Thyroid gland (tissue), 4 donors: ENCODE measurements at regions of chr16 and their contacts with region 1.

Region 1: DNA sequence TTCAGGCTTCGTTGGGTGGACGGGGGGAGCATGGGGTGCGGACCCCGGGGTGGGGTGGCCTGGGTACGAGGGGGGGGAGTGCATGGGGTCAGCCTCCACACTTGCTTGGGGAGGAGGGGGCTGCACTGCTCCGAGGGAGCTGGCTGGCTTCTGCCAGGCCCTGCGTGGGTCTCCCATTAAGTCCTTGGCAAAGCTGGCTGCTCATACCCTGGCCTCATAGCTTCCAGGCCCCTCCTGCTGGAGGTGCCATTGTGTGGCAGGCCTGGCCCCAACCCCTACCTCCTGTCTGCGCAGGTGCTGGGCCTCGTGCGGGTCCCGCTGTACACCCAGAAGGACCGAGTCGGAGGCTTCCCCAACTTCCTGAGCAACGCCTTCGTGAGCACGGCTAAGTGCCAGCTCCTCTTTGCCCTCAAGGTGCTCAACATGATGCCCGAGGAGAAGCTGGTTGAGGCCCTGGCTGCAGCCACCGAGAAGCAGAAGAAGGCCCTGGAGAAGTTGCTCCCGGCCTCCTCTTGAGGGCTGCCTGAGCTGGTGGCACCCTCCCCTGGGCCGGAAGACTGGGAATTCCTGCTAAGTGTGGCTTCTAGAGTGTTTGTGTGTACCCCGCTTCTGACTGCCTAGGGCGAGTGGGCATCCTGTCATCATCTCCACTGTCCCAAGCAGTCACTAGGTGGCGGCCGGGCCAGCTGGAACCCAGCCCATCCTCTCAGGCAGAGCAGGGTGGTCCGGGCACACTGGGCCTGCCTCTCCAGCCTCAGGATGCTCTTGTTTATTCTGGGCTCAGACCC is 1.5 kb downstream of the NUDT16L1 start:
- DNase-seq: no peak
- H3K4me3 ChIP-seq: peak overlapping the region in 1 of 3 donors; percentile 97
- H3K27ac ChIP-seq: peak overlapping the region in 2 of 3 donors; percentile 22 to 87
- H3K4me1 ChIP-seq: peaks cover 15 to 22% of the 10 kb centered on the region in 2 donors
- H3K27me3 ChIP-seq: no peaks in the 10 kb centered on the region
- CTCF ChIP-seq: no peak
- POLR2A ChIP-seq: no peak

Region 2: DNA sequence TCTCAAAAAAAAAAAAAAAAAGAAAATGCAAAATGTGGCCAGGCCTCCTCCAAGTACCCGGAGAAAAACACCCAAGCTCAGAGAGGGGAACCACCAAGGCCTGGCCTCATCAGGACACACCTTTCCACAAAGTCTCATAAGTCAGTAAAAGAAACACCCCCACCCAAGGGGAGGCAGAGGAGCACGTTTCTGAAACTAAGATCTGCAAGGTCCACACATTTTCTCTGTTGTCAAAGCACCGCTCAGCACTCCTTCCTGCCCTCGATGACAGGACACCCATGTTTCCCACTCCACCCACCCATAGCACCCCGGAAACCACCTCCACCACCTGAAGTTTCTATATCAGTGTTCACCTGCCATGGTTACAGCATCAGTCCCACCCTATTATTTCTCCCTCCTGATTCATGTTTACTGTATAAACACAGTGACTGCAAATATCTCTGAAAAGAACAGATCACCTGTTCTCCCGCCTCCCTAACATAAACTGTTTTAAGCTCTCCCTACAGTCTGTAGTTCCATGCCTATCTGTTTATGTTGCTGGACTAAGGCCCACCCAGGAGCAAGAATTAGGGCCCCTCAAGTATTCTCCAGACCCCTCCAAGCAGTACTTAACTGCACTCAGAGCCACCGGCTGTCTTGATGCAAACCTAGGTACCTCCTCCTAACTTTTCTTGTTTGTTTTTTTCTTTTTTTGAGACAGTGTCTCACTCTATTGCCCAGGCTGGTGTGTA is 280.5 kb before region 1 on chr16:
- intact Hi-C with region 1: no loop called
- DNase-seq: no peak
- H3K4me3 ChIP-seq: no peak overlapping the region
- H3K27ac ChIP-seq: no peak overlapping the region
- H3K4me1 ChIP-seq: peaks cover 10 to 16% of the 10 kb centered on the region in 2 donors
- H3K27me3 ChIP-seq: no peaks in the 10 kb centered on the region
- CTCF ChIP-seq: no peak
- POLR2A ChIP-seq: no peak

Region 3: GRCh38 chr16:4616047-4616811 is 78.6 kb before region 1 on chr16:
- intact Hi-C with region 1: loop called (anchors 5 kb)
- DNase-seq: peak; percentile 100
- H3K4me3 ChIP-seq: peak overlapping the region; percentile 0 to 94 (median 53)
- H3K27ac ChIP-seq: peak overlapping the region; percentile 89 to 98 (median 97)
- H3K4me1 ChIP-seq: peaks cover 41 to 62% of the 10 kb centered on the region in 2 donors
- H3K27me3 ChIP-seq: no peaks in the 10 kb centered on the region
- CTCF ChIP-seq: peak in 3 of 6 experiments; percentile 26 to 28 (median 26)
- POLR2A ChIP-seq: peak; percentile 86 to 92

Region 4: GRCh38 chr16:4734063-4734729 is 39.3 kb after region 1 on chr16 and contains the starts of genes ANKS3 and DNAAF8:
- intact Hi-C with region 1: loop called (anchors 5 kb)
- DNase-seq: peak; percentile 98
- H3K4me3 ChIP-seq: peak within 1 kb of the TSS; percentile 77 to 90 (median 86)
- H3K27ac ChIP-seq: peak within 1 kb of the TSS in 2 of 3 donors; percentile 28 to 61
- H3K4me1 ChIP-seq: peaks cover 0 to 9% of the 10 kb centered on the region in 2 donors
- H3K27me3 ChIP-seq: no peaks in the 10 kb centered on the region
- CTCF ChIP-seq: no peak
- POLR2A ChIP-seq: peak in 1 of 2 donors; percentile 64
- total RNA-seq, gene ANKS3: 22.9 to 35.3 (median 25.1) TPM
- total RNA-seq, gene DNAAF8: 0.25 to 4.1 (median 2.8) TPM